Activated T-helper 2 cell treated with anti-CD3 and anti-CD28 coated beads, Interferon-gamma antibody, Interleukin-2, Interleukin-4, amounts not matched to agents 10 μg/mL and 5 μg/mL and 100 μg/mL, durations not matched to agents 14 hours and 24 hours and 36 hours (primary cell): ENCODE measurements at regions of chr18 and their contacts with region 1.

Region 1: GRCh38 chr18:9017170-9017904 is 85.2 kb upstream of the NDUFV2 start:
- DNase-seq: peak; percentile 53
- H3K4me3 Mint-ChIP-seq: peak overlapping the region; percentile 28
- H3K27ac Mint-ChIP-seq: peak overlapping the region; percentile 62
- H3K4me1 Mint-ChIP-seq: peaks cover 19% of the 10 kb centered on the region
- H3K27me3 Mint-ChIP-seq: no peaks in the 10 kb centered on the region

Region 2: DNA sequence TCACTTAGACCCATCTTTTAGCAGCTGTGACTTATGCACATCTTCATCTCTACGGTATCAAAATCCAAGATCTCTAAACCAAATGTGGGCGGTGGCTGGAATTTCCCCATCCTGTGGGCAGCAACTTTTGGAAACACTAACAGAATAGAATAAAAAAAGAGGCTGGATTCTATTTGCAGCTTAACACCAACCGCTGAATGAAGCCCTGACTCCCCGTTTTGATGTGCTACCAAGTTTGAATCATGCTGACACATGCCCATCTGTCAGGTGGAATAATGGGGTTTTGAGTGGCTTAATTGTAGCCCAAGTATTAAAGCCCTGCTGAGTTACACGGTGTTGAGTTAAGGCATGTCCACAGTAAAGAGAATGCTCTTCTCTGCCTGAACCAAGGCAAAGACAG is 146.8 kb before region 1 on chr18:
- intact Hi-C with region 1: no loop called
- DNase-seq: no peak
- H3K4me3 Mint-ChIP-seq: no peak overlapping the region
- H3K27ac Mint-ChIP-seq: no peak overlapping the region
- H3K4me1 Mint-ChIP-seq: no peaks in the 10 kb centered on the region
- H3K27me3 Mint-ChIP-seq: peaks cover 6% of the 10 kb centered on the region

Region 3: GRCh38 chr18:8951491-8951890 is 65.8 kb before region 1 on chr18:
- intact Hi-C with region 1: no loop called
- DNase-seq: no peak
- H3K4me3 Mint-ChIP-seq: no peak overlapping the region
- H3K27ac Mint-ChIP-seq: no peak overlapping the region
- H3K4me1 Mint-ChIP-seq: no peaks in the 10 kb centered on the region
- H3K27me3 Mint-ChIP-seq: no peaks in the 10 kb centered on the region

Region 4: GRCh38 chr18:9055185-9055584 is 37.8 kb after region 1 on chr18:
- intact Hi-C with region 1: loop called (anchors 2 kb)
- DNase-seq: no peak
- H3K4me3 Mint-ChIP-seq: no peak overlapping the region
- H3K27ac Mint-ChIP-seq: no peak overlapping the region
- H3K4me1 Mint-ChIP-seq: peaks cover 7% of the 10 kb centered on the region
- H3K27me3 Mint-ChIP-seq: no peaks in the 10 kb centered on the region